Adrenal gland (tissue), 19 donors: ENCODE measurements at regions of chr6 and their contacts with region 1.

Region 1: DNA sequence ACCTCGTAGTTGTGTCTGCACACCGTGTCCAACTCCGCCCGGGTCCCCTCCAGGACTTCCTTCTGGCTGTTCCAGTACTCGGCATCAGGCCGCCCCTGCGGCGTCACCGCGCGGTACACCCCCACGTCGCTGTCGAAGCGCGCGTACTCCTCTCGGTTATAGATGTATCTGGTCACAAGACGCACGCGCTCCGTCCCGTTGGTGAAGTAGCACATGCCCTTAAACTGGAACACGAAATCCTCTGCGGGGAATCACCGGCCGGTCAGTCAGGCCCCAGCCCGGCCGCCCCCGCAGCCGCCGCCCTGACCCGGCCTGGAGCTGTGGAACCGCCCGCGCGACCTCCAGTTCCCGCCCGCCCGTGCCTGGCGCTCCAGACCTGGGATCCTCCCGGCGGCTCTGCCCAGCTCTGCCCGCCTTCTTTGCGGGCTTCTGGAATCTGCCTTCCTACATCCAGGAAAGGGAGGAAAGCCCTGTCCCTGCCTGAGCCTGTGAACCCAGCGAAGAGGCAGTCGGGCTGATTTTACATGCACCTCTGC is 1.6 kb downstream of the HLA-DQB1 start:
- DNase-seq: peak in 3 of 7 donors; percentile 13 to 41 (median 19)
- H3K4me3 ChIP-seq: no peak overlapping the region
- H3K27ac ChIP-seq: peak overlapping the region in 1 of 5 donors; percentile 40
- H3K4me1 ChIP-seq: no peaks in the 10 kb centered on the region
- H3K27me3 ChIP-seq: no peaks in the 10 kb centered on the region
- CTCF ChIP-seq: no peak
- POLR2A ChIP-seq: no peak

Region 2: GRCh38 chr6:32255199-32256153 is 409.4 kb before region 1 on chr6:
- intact Hi-C with region 1: no loop called
- DNase-seq: peak; percentile 61 to 85 (median 78)
- H3K4me3 ChIP-seq: peak overlapping the region in 2 of 4 donors; percentile 11 to 58
- H3K27ac ChIP-seq: peak overlapping the region in 4 of 5 donors; percentile 2 to 91 (median 82)
- H3K4me1 ChIP-seq: peaks cover 7 to 8% of the 10 kb centered on the region in 2 donors
- H3K27me3 ChIP-seq: no peaks in the 10 kb centered on the region
- CTCF ChIP-seq: peak; percentile 45 to 70 (median 64)
- POLR2A ChIP-seq: no peak

Region 3: DNA sequence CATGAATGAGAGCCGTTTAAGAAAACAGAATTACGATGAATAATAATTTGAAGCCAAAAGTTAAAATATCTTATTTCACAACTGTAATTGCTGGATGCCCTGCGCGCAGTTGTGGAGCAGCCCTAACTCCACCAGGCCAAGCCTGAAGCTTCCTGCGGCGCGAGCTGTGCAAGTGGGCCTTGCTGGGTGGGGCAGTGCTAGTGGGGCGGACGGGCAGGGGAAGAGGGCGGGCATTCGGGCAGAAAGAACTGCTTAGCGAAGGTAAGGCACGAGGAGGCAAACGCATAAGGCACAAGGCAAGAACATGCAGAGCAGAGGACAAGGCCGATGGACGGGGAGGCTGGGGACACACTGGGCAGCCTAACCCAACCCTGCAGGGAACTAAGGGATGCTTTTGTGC is 96.2 kb after region 1 on chr6:
- intact Hi-C with region 1: loop called in 1 of 2 experiments (anchors 2 kb)
- DNase-seq: no peak
- H3K4me3 ChIP-seq: no peak overlapping the region
- H3K27ac ChIP-seq: no peak overlapping the region
- H3K4me1 ChIP-seq: no peaks in the 10 kb centered on the region
- H3K27me3 ChIP-seq: peaks cover 9% of the 10 kb centered on the region
- CTCF ChIP-seq: no peak
- POLR2A ChIP-seq: no peak

Region 4: GRCh38 chr6:33105916-33106871 is 441.3 kb after region 1 on chr6:
- intact Hi-C with region 1: no loop called
- DNase-seq: no peak
- H3K4me3 ChIP-seq: no peak overlapping the region
- H3K27ac ChIP-seq: no peak overlapping the region
- H3K4me1 ChIP-seq: no peaks in the 10 kb centered on the region
- H3K27me3 ChIP-seq: peaks cover 3% of the 10 kb centered on the region
- CTCF ChIP-seq: no peak
- POLR2A ChIP-seq: no peak